ENCODE measurements at regions of chr10 and their contacts with region 1.

Region 1: GRCh38 chr10:97869091-97870042 is 19.7 kb downstream of the GOLGA7B start:
- DNase-seq: peak; percentile 90
- ATAC-seq: peak; percentile 99
- H3K4me3 ChIP-seq: no peak overlapping the region; the same call in 1 of the 2 replicates
- H3K27ac ChIP-seq: no peak overlapping the region
- H3K4me1 ChIP-seq: peaks cover 12% of the 10 kb centered on the region
- H3K27me3 ChIP-seq: no peaks in the 10 kb centered on the region
- CTCF ChIP-seq: peak; percentile 84

Region 2: DNA sequence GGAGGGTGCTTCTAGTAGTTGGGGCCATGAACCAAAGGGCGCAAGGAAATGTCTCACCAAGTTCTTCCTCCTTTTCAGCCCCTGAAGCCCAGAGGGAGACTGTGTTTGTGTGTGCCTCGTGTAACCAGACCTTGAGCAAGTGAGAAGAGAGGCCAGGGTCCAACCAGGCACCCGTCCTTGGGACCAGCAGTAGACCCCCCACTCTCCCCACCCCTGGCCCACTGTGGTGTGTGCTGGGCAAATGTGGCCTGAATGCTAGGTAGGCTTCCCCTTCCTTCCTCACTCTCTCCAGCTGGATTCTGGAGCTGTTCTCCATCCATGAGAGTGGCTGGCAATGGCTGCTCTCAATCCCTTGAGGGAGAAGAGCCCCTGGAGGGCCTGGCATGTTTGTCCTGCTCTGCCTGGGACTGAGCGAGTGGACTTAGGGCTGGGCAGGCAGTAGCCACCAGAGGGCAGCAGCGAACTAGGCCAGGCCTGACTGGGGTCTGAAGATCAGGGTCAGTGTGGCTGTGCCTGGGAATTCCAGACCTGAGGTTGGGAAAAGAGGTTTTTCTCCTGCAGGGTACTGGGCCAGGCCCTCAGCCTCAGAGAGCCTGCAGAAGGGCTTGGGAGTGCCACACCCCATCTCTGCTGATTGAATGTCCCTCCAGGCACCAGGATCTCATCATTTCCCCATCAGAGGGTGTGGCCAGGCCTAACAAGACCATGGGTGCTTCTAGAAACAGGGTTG is 110.0 kb before region 1 on chr10:
- CTCF ChIA-PET with region 1: no interaction called
- POLR2A ChIA-PET with region 1: no interaction called
- intact Hi-C with region 1: loop called (anchors 1 kb)
- DNase-seq: peak; percentile 59
- ATAC-seq: peak; percentile 95
- H3K4me3 ChIP-seq: no peak overlapping the region
- H3K27ac ChIP-seq: no peak overlapping the region
- H3K4me1 ChIP-seq: no peaks in the 10 kb centered on the region
- H3K27me3 ChIP-seq: no peaks in the 10 kb centered on the region
- CTCF ChIP-seq: peak; percentile 80

Region 3: DNA sequence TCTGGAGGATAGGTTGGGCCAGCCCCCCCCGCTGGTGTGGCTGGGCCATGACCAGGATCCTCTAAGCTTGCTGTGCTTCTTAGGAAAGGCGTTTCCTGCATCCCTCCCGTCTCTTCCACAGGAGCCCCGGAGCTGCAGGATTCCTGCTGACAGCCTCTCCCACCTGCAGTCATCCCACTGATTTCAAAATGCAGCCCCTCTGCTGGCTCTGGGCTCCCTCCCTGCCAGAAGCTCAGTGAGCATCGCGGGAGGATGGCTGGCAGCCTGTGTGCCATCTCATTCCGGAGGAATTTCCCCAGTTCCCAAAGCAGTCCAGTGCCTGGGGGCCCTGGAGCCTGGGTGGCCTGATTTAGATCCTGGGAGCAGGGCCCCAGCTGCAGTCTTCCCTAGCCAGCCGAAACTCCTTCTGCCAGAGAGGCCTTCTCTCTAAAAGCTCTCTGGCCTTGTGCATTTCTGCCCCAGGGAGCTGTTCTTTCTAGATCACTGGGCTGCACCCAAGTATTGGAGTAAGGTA is 41.5 kb before region 1 on chr10:
- CTCF ChIA-PET with region 1: no interaction called
- POLR2A ChIA-PET with region 1: no interaction called
- intact Hi-C with region 1: no loop called
- DNase-seq: peak; percentile 48
- ATAC-seq: peak; percentile 74
- H3K4me3 ChIP-seq: no peak overlapping the region
- H3K27ac ChIP-seq: no peak overlapping the region
- H3K4me1 ChIP-seq: peaks cover 21% of the 10 kb centered on the region
- H3K27me3 ChIP-seq: no peaks in the 10 kb centered on the region
- CTCF ChIP-seq: no peak

Measured in PC-3 (cell line).